CD4-positive, alpha-beta memory T cell (primary cell): ENCODE measurements at regions of chr2 and their contacts with region 1.

Region 1: GRCh38 chr2:230924470-230925341 is at the start of gene GPR55:
- DNase-seq: peak; percentile 39 to 56 (median 53)
- H3K4me3 ChIP-seq: peak within 1 kb of the TSS; percentile 52 to 66
- H3K4me3 Mint-ChIP-seq: peak within 1 kb of the TSS; percentile 86 to 96 (median 92)
- H3K27ac ChIP-seq: peak within 1 kb of the TSS; percentile 40
- H3K27ac Mint-ChIP-seq: peak within 1 kb of the TSS; percentile 77 to 91 (median 84)
- H3K4me1 ChIP-seq: peaks cover 24% of the 10 kb centered on the region
- H3K4me1 Mint-ChIP-seq: peaks cover 24 to 53% (median 30%) of the 10 kb centered on the region in 4 donors
- H3K27me3 ChIP-seq: no peaks in the 10 kb centered on the region
- H3K27me3 Mint-ChIP-seq: peaks cover 2% of the 10 kb centered on the region in 2 donors
- total RNA-seq, gene GPR55: 8.1 to 8.3 TPM

Region 2: GRCh38 chr2:230847883-230848388 is 76.8 kb before region 1 on chr2:
- CTCF ChIA-PET with region 1: interaction called, 6 read pairs
- POLR2A ChIA-PET with region 1: no interaction called
- intact Hi-C with region 1: loop called (anchors 1 kb)
- DNase-seq: peak; percentile 74 to 82 (median 76)
- H3K4me3 ChIP-seq: no peak overlapping the region
- H3K4me3 Mint-ChIP-seq: peak overlapping the region in 6 of 8 donors; percentile 36 to 79 (median 50)
- H3K27ac ChIP-seq: no peak overlapping the region
- H3K27ac Mint-ChIP-seq: peak overlapping the region in 2 of 7 donors; percentile 27
- H3K4me1 ChIP-seq: peaks cover 8% of the 10 kb centered on the region
- H3K4me1 Mint-ChIP-seq: peaks cover 5 to 10% (median 7%) of the 10 kb centered on the region in 4 donors
- H3K27me3 ChIP-seq: no peaks in the 10 kb centered on the region
- H3K27me3 Mint-ChIP-seq: peaks cover 19 to 20% of the 10 kb centered on the region in 2 donors

Region 3: GRCh38 chr2:230902180-230902899 is 22.4 kb before region 1 on chr2:
- CTCF ChIA-PET with region 1: interaction called, 17 read pairs
- POLR2A ChIA-PET with region 1: interaction called, 12 read pairs
- intact Hi-C with region 1: loop called (anchors 1 kb)
- DNase-seq: peak in 4 of 5 donors; percentile 33 to 54 (median 38)
- H3K4me3 ChIP-seq: no peak overlapping the region
- H3K4me3 Mint-ChIP-seq: no peak overlapping the region
- H3K27ac ChIP-seq: no peak overlapping the region
- H3K27ac Mint-ChIP-seq: no peak overlapping the region
- H3K4me1 ChIP-seq: peaks cover 17% of the 10 kb centered on the region
- H3K4me1 Mint-ChIP-seq: peaks cover 7 to 23% (median 18%) of the 10 kb centered on the region in 4 donors
- H3K27me3 ChIP-seq: no peaks in the 10 kb centered on the region
- H3K27me3 Mint-ChIP-seq: peaks cover 5 to 7% of the 10 kb centered on the region in 2 donors

Region 4: DNA sequence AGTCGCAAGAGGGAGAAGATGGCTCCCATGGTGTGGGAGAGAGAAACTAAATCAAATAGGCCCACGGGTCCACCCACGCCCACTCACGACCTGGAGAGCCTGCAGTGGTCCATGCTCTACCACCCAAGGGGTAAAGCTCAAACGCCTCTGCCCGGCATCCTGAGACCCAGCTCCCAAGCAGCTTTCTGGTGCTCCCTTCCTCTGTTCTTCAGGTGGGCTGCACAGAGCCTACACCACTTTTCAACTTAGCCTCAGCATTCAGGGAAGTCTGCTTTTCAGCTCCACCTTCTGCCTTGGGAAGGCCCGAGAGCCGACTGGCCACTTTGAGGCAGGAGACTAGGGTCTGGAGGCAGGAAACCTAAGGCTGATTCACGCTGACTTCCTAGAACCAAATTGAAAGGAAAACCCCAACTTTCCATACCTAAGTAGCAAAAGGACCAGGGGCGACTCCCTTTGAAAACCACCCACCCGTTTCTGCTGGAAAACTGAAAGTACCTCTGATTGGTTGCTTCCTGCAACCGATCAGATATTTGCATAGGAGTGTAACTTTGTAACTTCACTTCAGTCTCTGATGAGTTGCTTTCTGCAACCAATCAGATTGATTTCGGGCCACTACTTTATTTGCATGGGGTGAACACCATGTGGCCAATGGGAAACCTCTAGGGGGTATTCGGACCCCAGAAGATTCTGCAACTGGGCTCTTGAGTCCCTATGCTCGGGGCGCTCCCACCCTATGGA is 44.4 kb after region 1 on chr2:
- CTCF ChIA-PET with region 1: interaction called, 16 read pairs
- POLR2A ChIA-PET with region 1: interaction called, 3 read pairs
- intact Hi-C with region 1: no loop called
- DNase-seq: no peak
- H3K4me3 ChIP-seq: no peak overlapping the region
- H3K4me3 Mint-ChIP-seq: peak overlapping the region; percentile 39 to 78 (median 71)
- H3K27ac ChIP-seq: no peak overlapping the region
- H3K27ac Mint-ChIP-seq: peak overlapping the region in 5 of 7 donors; percentile 51 to 81 (median 65)
- H3K4me1 ChIP-seq: peaks cover 29% of the 10 kb centered on the region
- H3K4me1 Mint-ChIP-seq: peaks cover 11 to 25% (median 20%) of the 10 kb centered on the region in 4 donors
- H3K27me3 ChIP-seq: no peaks in the 10 kb centered on the region
- H3K27me3 Mint-ChIP-seq: peaks cover 0 to 2% of the 10 kb centered on the region in 2 donors

Region 5: GRCh38 chr2:230974096-230974913 is 49.6 kb after region 1 on chr2:
- CTCF ChIA-PET with region 1: interaction called, 16 read pairs
- POLR2A ChIA-PET with region 1: interaction called, 4 read pairs
- intact Hi-C with region 1: no loop called
- DNase-seq: peak; percentile 69 to 90 (median 72)
- H3K4me3 ChIP-seq: peak overlapping the region in 1 of 2 donors; percentile 25
- H3K4me3 Mint-ChIP-seq: peak overlapping the region; percentile 40 to 75 (median 64)
- H3K27ac ChIP-seq: peak overlapping the region; percentile 73
- H3K27ac Mint-ChIP-seq: peak overlapping the region; percentile 78 to 99 (median 93)
- H3K4me1 ChIP-seq: peaks cover 33% of the 10 kb centered on the region
- H3K4me1 Mint-ChIP-seq: peaks cover 35 to 65% (median 47%) of the 10 kb centered on the region in 4 donors
- H3K27me3 ChIP-seq: no peaks in the 10 kb centered on the region
- H3K27me3 Mint-ChIP-seq: no peaks in the 10 kb centered on the region